ENCODE measurements at regions of chr3 and their contacts with region 1.

Region 1: GRCh38 chr3:87503900-87504508 is 227.6 kb upstream of the POU1F1 start:
- DNase-seq: peak; percentile 59

Region 2: DNA sequence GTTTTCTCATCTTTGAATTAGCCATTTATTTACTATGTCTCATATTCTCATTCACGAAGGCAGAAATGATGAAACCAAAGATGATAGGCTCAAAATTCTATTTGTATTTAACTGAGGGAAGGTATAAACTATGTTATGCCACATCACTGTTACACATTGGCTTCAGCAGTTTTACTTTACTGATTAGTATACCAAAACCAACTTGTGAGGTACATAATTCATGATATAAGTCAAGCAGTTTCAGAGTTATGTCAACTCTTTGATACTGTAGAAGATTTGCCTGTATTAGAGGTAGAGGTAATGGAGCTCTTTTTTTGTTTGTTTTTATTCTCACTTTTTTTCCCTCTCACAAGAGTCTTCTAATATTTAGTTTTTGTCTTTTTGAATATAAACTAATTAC is 254.0 kb before region 1 on chr3:
- in situ Hi-C with region 1: loop called (anchors 10 kb)
- DNase-seq: no peak

Region 3: DNA sequence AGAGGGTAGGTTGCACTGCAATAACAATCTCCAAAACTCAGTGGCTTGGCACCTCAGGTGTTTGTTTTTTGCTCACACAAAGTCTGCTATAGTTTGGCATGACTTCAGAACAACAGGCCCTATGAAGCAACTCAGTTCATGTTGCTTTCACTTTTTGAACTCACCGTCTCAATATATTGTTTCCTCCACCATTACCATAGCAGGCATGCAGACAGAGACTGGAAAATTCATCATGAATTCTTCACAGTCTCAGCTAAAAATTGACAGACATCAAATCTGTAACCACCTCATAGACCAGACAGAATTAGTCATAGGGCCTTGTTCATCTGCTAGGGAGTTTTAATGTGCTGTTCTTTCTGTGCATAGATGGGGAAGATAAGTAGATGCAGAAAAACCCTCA is 66.2 kb before region 1 on chr3:
- in situ Hi-C with region 1: no loop called
- DNase-seq: peak; percentile 6

Region 4: DNA sequence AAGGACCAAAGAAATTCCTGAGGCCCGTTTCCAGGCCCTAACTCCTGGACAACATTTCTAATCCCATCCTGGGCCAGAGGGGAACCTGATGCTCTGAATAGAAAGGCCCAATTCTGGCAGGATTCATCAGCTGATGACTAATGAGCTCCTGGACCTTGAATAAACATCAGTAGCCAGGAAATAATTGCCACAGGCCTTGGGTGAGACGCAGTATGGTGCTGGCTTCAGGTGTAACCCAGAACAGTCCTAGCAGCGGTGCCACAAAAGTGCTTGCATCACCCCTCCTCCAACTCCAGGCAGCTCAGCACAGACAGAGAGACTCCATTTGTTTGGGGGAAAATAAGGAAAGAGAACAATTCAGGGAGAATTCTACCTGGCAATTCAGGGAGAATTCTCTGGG is 43.0 kb before region 1 on chr3:
- in situ Hi-C with region 1: no loop called
- DNase-seq: no peak

Measured in Caki2 (cell line).